Tibial artery (tissue), 4 donors: ENCODE measurements at regions of chr1 and their contacts with region 1.

Region 1: DNA sequence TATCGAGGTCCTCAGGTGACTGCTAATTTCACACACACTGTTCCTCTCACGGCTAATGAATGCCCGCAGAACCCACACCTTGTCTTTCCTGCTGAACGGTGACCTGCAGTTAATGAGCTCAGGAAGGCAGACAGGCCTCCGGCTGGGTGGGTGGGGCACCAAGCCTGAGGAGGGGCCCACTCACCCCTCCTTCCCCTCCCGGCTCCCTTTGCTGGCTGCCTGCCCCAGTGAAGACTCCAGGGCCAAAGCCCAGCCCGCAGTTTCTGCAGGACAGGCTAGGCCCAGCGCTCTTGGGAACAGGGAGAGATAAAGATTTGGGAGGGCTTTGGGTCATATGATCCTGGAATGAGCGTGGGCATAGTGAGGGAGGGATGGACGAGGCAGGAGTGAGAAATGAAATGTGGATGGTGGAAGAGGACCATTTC is 26.4 kb downstream of the FOXO6 start:
- DNase-seq: peak; percentile 65 to 89
- H3K4me3 ChIP-seq: no peak overlapping the region
- H3K27ac ChIP-seq: peak overlapping the region; percentile 29 to 47
- H3K4me1 ChIP-seq: peaks cover 0 to 39% (median 27%) of the 10 kb centered on the region in 4 donors
- H3K27me3 ChIP-seq: peaks cover 0 to 3% of the 10 kb centered on the region in 2 donors
- CTCF ChIP-seq: no peak

Region 2: GRCh38 chr1:41423511-41424221 is 36.0 kb after region 1 on chr1:
- intact Hi-C with region 1: loop called (anchors 5 kb)
- DNase-seq: no peak
- H3K4me3 ChIP-seq: peak overlapping the region in 1 of 2 donors; percentile 3
- H3K27ac ChIP-seq: no peak overlapping the region
- H3K4me1 ChIP-seq: peaks cover 2 to 23% (median 6%) of the 10 kb centered on the region in 4 donors
- H3K27me3 ChIP-seq: no peaks in the 10 kb centered on the region
- CTCF ChIP-seq: no peak